ENCODE measurements at regions of chr20 and their contacts with region 1.

Region 1: DNA sequence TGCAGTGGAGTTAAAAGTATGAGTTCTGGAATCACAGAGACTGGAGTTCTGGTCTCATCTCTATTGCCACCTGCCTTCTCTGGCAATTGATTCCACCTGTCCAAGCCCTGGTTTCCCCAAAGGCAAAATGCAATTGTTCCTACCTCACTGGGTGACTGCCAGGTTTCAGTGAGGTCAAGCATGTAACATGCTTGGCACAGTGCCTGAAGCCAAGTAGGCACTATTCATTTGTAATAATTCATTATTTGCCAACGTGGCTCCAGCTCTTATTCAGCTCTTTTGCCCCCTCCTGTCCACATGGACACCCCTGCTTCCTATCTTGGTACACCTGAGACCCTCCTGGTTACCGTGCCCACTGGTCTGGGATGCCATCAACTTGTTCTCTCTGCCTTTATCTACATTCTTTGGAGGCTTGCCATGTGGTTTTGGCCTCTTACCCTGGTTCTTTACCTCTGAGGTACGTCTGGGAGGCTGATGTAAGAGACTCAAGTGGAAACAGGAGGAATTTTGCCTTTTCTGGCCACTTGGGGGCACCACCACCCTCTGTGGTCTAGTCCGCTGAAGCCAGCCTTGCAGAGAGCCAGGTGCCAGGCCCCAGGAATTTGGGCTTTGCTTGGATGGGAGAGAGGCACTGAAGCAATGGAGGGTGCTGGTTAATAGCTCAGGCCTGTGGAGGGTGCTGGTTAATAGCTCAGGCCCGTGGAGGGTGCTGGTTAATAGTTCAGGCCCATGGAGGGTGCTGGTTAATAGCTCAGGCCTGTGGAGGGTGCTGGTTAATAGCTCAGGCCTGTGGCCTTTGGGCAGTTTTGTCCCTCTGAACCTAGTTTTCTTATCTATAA is 1.7 kb downstream of the KCNK15 start:
- DNase-seq: peak in 4 of 5 donors; percentile 66 to 78 (median 70)
- ATAC-seq: peak in 3 of 4 donors; percentile 32 to 63 (median 54)
- H3K4me3 ChIP-seq: no peak overlapping the region
- H3K27ac ChIP-seq: no peak overlapping the region
- H3K4me1 ChIP-seq: peaks cover 0 to 38% (median 15%) of the 10 kb centered on the region in 12 donors
- H3K27me3 ChIP-seq: peaks cover 0 to 46% (median 7%) of the 10 kb centered on the region in 9 donors
- CTCF ChIP-seq: peak; percentile 53 to 79 (median 70)
- POLR2A ChIP-seq: no peak

Region 2: GRCh38 chr20:44810391-44811149 is 63.2 kb after region 1 on chr20 and contains the start of gene RIMS4:
- intact Hi-C with region 1: loop called in 1 of 10 experiments (anchors 5 kb)
- DNase-seq: no peak
- ATAC-seq: peak in 2 of 4 donors; percentile 27 to 38
- H3K4me3 ChIP-seq: peak within 1 kb of the TSS in 10 of 12 donors; percentile 12 to 44 (median 34)
- H3K27ac ChIP-seq: no peak within 1 kb of the TSS
- H3K4me1 ChIP-seq: peaks cover 0 to 11% (median 0%) of the 10 kb centered on the region in 12 donors
- H3K27me3 ChIP-seq: peaks cover 9 to 70% (median 34%) of the 10 kb centered on the region in 9 donors
- CTCF ChIP-seq: no peak
- POLR2A ChIP-seq: no peak
- total RNA-seq, gene RIMS4: 0.10 to 0.59 (median 0.29) TPM in 4 of 9 donors, not detected in the others

Region 3: GRCh38 chr20:44861531-44862006 is 114.2 kb after region 1 on chr20:
- intact Hi-C with region 1: loop called in 7 of 10 experiments (anchors 2 kb)
- DNase-seq: peak in 2 of 5 donors; percentile 32 to 48
- ATAC-seq: peak; percentile 42 to 91 (median 70)
- H3K4me3 ChIP-seq: no peak overlapping the region
- H3K27ac ChIP-seq: no peak overlapping the region
- H3K4me1 ChIP-seq: peaks cover 0 to 27% (median 6%) of the 10 kb centered on the region in 12 donors
- H3K27me3 ChIP-seq: no peaks in the 10 kb centered on the region
- CTCF ChIP-seq: no peak
- POLR2A ChIP-seq: no peak

Region 4: DNA sequence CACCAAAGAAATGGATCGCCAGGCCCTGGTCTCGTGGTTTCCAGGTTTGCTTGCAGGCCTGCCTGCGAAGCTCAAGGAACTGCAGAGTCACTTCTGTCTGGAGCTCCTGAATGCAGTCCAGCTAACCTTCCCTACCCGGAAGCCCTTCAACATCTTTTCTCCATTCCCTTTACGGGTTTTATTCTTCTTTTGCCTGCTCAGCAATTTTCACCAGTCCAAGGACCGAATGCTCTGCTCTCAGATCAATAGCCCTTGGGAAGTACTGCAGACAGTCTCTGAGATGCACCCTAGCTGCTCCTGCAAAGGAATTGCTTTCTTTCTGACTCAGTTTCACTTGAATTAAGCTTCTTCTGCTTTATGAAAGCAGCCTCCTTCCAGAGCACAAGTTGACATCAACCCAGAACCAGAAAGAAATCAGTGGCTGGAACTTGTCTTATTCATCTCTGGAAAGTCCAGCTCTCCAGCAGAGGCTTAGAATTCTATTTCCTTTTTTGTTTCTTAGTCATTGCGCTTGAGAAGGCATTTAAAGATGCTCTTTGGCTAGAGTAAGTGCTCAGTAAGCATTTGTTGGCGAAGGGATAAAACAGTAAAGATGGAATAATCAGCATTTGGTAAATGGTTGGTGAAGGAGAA is 119.4 kb after region 1 on chr20:
- intact Hi-C with region 1: loop called (anchors 1 to 2 kb)
- DNase-seq: no peak
- ATAC-seq: no peak
- H3K4me3 ChIP-seq: peak overlapping the region in 1 of 12 donors; percentile 32
- H3K27ac ChIP-seq: no peak overlapping the region
- H3K4me1 ChIP-seq: peaks cover 0 to 28% (median 9%) of the 10 kb centered on the region in 12 donors
- H3K27me3 ChIP-seq: peaks cover 0 to 5% (median 0%) of the 10 kb centered on the region in 9 donors
- CTCF ChIP-seq: no peak
- POLR2A ChIP-seq: no peak